GM12878 (cell line): ENCODE measurements at regions of chr3 and their contacts with region 1.

Region 1: DNA sequence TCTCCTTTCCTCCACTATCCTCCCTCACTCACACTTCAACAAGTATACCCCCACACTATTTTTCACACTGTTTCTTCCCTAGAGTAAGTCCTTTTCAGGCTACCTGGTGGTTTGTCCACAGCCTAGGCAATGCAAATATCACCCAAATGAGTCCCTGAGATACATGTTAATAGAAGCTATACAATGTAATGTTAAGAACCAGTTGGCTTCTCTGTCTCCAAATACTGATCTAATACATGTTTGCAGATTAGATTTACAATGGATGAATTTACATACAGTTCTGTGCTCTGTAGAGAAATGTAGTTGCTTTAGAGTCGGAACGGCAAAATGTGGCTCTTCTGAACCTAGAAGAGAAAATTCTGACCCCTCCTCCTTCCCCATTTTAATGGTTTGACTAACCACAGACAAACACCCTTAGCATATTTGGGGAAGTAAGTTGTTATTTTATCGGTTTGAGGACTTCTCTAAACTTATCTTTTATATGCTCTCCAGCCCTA is 63.6 kb upstream of the MBNL1 start:
- DNase-seq: no peak
- ATAC-seq: peak; percentile 53
- H3K4me3 ChIP-seq: peak overlapping the region; percentile 30
- H3K27ac ChIP-seq: peak overlapping the region; percentile 82
- H3K4me1 ChIP-seq: peaks cover 11% of the 10 kb centered on the region; the same call in 1 of the 2 replicates
- H3K27me3 ChIP-seq: no peaks in the 10 kb centered on the region
- CTCF ChIP-seq: no peak
- EP300 ChIP-seq: no peak
- POLR2A ChIP-seq: no peak
- RAD21 ChIP-seq: no peak

Region 2: DNA sequence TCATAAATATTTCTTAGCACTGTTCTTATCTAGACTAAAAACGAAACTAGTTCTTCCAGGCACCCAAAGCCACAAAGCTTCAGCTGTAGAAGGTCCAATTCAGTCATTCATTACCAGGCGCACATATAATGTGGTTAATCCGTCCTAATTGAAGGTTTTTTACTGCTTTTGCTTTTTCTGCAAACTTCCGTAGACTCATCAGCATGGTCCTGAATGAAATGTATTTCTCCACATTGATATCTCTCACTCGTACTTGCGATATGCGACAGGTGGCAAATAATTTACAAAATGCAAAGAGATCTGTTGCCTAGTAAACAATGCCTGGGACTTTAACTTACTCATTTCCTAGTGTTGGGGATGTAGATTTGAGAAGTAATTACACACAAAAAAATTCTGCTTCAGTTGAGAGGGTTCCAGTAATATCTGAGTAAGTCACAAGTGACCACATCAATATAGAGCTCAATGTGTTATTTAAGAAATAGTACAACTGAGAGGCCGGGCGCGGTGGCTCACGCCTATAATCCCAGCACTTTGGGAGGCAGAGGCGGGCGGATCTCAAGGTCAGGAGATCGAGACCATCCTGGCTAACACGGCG is 11.4 kb before region 1 on chr3:
- CTCF ChIA-PET with region 1: interaction called, 5 read pairs
- POLR2A ChIA-PET with region 1: interaction called, 3 read pairs
- RAD21 ChIA-PET with region 1: interaction called, 8 read pairs
- SMC1A ChIA-PET with region 1: interaction called, 18 read pairs
- in situ Hi-C with region 1: no loop called
- intact Hi-C with region 1: no loop called
- DNase-seq: no peak
- ATAC-seq: peak; percentile 67
- H3K4me3 ChIP-seq: peak overlapping the region; percentile 44; the same call in 1 of the 2 replicates
- H3K27ac ChIP-seq: peak overlapping the region; percentile 48; the same call in 1 of the 2 replicates
- H3K4me1 ChIP-seq: peaks cover 29% of the 10 kb centered on the region
- H3K27me3 ChIP-seq: no peaks in the 10 kb centered on the region
- CTCF ChIP-seq: no peak
- EP300 ChIP-seq: no peak
- POLR2A ChIP-seq: no peak
- RAD21 ChIP-seq: no peak; the same call in 1 of the 2 replicates

Region 3: GRCh38 chr3:152232679-152233078 is 27.5 kb after region 1 on chr3:
- CTCF ChIA-PET with region 1: interaction called, 5 read pairs
- POLR2A ChIA-PET with region 1: interaction called, 4 read pairs
- RAD21 ChIA-PET with region 1: no interaction called
- SMC1A ChIA-PET with region 1: interaction called, 12 read pairs
- in situ Hi-C with region 1: no loop called
- intact Hi-C with region 1: no loop called
- DNase-seq: no peak
- ATAC-seq: no peak
- H3K4me3 ChIP-seq: no peak overlapping the region
- H3K27ac ChIP-seq: no peak overlapping the region
- H3K4me1 ChIP-seq: no peaks in the 10 kb centered on the region
- H3K27me3 ChIP-seq: no peaks in the 10 kb centered on the region
- CTCF ChIP-seq: no peak
- EP300 ChIP-seq: no peak
- POLR2A ChIP-seq: no peak
- RAD21 ChIP-seq: no peak

Region 4: GRCh38 chr3:152258448-152259393 is 53.6 kb after region 1 on chr3:
- CTCF ChIA-PET with region 1: interaction called, 6 read pairs
- POLR2A ChIA-PET with region 1: no interaction called
- RAD21 ChIA-PET with region 1: interaction called, 15 read pairs
- SMC1A ChIA-PET with region 1: interaction called, 25 read pairs
- in situ Hi-C with region 1: no loop called
- intact Hi-C with region 1: no loop called
- DNase-seq: no peak
- ATAC-seq: peak; percentile 75
- H3K4me3 ChIP-seq: no peak overlapping the region; the same call in 1 of the 2 replicates
- H3K27ac ChIP-seq: peak overlapping the region; percentile 11; the same call in 1 of the 2 replicates
- H3K4me1 ChIP-seq: peaks cover 27% of the 10 kb centered on the region
- H3K27me3 ChIP-seq: no peaks in the 10 kb centered on the region
- CTCF ChIP-seq: no peak
- EP300 ChIP-seq: no peak
- POLR2A ChIP-seq: no peak
- RAD21 ChIP-seq: no peak

Region 5: DNA sequence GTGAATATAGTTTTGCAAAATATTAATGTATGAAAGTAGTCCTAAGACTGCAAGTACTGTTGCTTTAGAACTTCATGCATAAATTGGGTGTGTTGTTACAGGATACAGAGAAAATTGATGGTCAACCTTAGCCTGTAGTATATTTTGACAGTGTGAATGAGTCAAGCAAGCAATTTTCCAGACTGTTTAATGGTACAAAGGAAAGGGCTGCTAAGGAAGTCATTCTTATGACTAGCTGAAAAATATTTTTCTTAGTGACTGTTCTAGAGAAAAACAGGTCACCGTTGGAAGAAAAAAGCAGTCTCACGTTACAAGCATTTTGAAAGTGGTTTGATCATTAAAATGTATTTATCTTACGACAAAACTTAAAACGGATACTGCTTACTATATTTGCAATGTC is 112.8 kb after region 1 on chr3:
- CTCF ChIA-PET with region 1: no interaction called
- POLR2A ChIA-PET with region 1: no interaction called
- RAD21 ChIA-PET with region 1: no interaction called
- SMC1A ChIA-PET with region 1: no interaction called
- in situ Hi-C with region 1: no loop called
- intact Hi-C with region 1: no loop called
- DNase-seq: no peak
- ATAC-seq: no peak
- H3K4me3 ChIP-seq: no peak overlapping the region
- H3K27ac ChIP-seq: no peak overlapping the region
- H3K4me1 ChIP-seq: peaks cover 11% of the 10 kb centered on the region
- H3K27me3 ChIP-seq: no peaks in the 10 kb centered on the region
- CTCF ChIP-seq: no peak
- EP300 ChIP-seq: no peak
- POLR2A ChIP-seq: no peak
- RAD21 ChIP-seq: no peak